Activated naive CD4-positive, alpha-beta T cell treated with anti-CD3 and anti-CD28 coated beads for 36 hours (primary cell): ENCODE measurements at regions of chr1 and their contacts with region 1.

Region 1: GRCh38 chr1:160646711-160647328 is at the start of gene SLAMF1:
- DNase-seq: peak; percentile 84
- H3K4me3 Mint-ChIP-seq: peak within 1 kb of the TSS; percentile 99
- H3K27ac Mint-ChIP-seq: peak within 1 kb of the TSS; percentile 99
- H3K4me1 Mint-ChIP-seq: peaks cover 49% of the 10 kb centered on the region
- H3K27me3 Mint-ChIP-seq: no peaks in the 10 kb centered on the region
- total RNA-seq, gene SLAMF1: 101 to 112 TPM

Region 2: DNA sequence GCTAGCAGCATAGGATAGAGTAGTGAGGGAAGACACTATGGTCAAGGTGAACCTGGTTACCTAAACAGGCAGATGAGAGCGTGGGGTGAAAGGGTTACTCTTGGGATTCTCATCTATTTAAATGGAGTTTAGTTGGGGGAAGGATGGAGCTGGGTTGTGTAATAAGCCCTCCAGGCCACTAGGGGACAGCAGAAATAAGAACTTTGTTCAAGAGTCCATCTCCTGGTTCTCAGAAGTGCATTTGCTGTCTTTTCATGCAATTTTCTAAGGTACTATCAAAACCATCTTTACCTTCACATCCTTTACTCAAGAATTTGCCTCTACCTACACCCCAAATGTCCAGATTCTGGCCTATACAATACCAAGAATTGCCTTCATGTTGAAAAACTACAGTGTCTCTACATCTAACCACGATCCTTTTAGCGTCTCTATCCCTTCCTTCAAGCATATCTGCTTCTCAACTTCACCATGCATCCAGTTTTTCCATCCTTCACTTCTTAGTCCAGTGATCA is 28.0 kb before region 1 on chr1:
- CTCF ChIA-PET with region 1: interaction called, 11 read pairs
- intact Hi-C with region 1: no loop called
- DNase-seq: peak; percentile 70
- H3K4me3 Mint-ChIP-seq: no peak overlapping the region
- H3K27ac Mint-ChIP-seq: peak overlapping the region; percentile 61
- H3K4me1 Mint-ChIP-seq: peaks cover 57% of the 10 kb centered on the region
- H3K27me3 Mint-ChIP-seq: no peaks in the 10 kb centered on the region

Region 3: DNA sequence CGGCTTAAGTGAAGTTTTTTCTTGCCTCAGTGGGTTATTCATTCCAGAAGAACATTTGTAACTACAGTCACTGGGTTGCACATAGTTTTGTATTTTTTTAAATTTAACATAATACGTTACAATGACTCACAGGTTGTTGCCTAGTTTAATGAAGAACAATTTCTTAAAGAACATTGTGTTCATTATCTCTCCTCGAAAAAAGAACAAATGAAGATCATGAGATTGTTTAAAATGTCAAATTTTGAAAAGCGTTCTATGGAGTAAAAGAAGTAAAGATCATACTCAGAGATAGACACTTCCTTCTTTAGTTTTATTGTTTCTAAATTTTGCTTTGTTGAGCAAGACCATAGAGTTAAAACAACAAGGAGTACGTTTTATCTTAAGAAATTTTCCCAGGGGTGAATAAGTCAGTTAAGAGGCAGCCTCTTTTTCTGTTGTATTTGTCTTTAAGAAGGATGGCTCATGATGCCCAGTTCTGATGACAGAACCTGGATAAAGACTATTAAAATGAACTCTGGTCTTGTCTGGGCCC is 10.5 kb after region 1 on chr1:
- CTCF ChIA-PET with region 1: interaction called, 5 read pairs
- intact Hi-C with region 1: loop called (anchors 1 kb)
- DNase-seq: no peak
- H3K4me3 Mint-ChIP-seq: peak overlapping the region; percentile 23
- H3K27ac Mint-ChIP-seq: peak overlapping the region; percentile 91
- H3K4me1 Mint-ChIP-seq: peaks cover 81% of the 10 kb centered on the region
- H3K27me3 Mint-ChIP-seq: no peaks in the 10 kb centered on the region

Region 4: GRCh38 chr1:160664573-160665051 is 17.8 kb after region 1 on chr1:
- CTCF ChIA-PET with region 1: interaction called, 3 read pairs
- intact Hi-C with region 1: loop called (anchors 2 kb)
- DNase-seq: peak; percentile 77
- H3K4me3 Mint-ChIP-seq: peak overlapping the region; percentile 54
- H3K27ac Mint-ChIP-seq: peak overlapping the region; percentile 93
- H3K4me1 Mint-ChIP-seq: peaks cover 72% of the 10 kb centered on the region
- H3K27me3 Mint-ChIP-seq: no peaks in the 10 kb centered on the region

Region 5: GRCh38 chr1:160711602-160712311 is 64.9 kb after region 1 on chr1 and contains the start of gene CD48:
- CTCF ChIA-PET with region 1: no interaction called
- intact Hi-C with region 1: loop called (anchors 2 kb)
- DNase-seq: peak; percentile 70
- H3K4me3 Mint-ChIP-seq: no peak within 1 kb of the TSS
- H3K27ac Mint-ChIP-seq: no peak within 1 kb of the TSS
- H3K4me1 Mint-ChIP-seq: peaks cover 28% of the 10 kb centered on the region
- H3K27me3 Mint-ChIP-seq: no peaks in the 10 kb centered on the region
- total RNA-seq, gene CD48: 338 to 340 TPM

Region 6: DNA sequence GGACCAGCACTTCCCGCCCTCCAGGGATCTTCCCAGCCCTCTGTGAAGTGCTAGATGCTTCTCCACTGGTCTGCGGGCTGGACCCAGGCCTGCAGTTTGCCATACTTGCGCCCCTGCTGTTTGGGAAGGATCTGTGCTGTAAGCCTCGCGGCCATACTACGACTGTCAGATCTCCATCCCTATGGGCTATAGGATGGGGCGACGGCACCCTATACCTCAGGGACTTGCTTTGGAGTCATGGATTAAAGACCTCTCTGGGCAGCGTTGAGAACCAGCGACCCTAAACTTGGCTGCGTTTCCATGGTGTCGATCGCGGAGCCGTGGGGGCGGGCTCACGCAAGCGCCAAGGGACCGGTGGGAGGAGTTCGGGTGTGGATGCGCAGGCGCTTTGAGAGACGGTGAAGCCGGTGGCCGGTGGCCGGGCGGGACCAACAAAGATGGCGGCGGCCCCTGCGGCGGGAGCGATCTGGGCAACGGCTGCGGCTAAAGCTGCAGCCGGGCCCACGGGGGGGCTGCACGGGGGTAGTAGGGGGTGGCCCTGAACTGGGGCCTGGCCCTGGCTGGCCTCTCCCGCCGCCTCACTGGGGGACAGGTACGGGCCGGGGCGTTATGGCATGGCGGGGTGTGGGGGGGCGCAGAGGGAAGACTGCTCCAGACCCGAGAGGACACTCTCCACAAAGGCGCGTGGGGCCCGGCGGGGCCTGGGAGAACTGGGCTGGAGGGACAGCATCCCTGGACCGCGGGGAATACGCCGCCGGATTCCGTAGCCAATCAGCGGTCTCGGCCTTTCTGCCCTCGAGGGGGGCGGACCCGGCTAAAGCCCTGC is 512.5 kb after region 1 on chr1 and contains the start of gene USP21:
- CTCF ChIA-PET with region 1: no interaction called
- intact Hi-C with region 1: no loop called
- DNase-seq: peak; percentile 94
- H3K4me3 Mint-ChIP-seq: peak within 1 kb of the TSS; percentile 82
- H3K27ac Mint-ChIP-seq: peak within 1 kb of the TSS; percentile 86
- H3K4me1 Mint-ChIP-seq: peaks cover 58% of the 10 kb centered on the region
- H3K27me3 Mint-ChIP-seq: no peaks in the 10 kb centered on the region
- total RNA-seq, gene USP21: 35.7 to 36.1 TPM